Caco-2 (cell line): ENCODE measurements at regions of chr10 and their contacts with region 1.

Region 1: GRCh38 chr10:70267161-70267933 is 16.5 kb downstream of the NPFFR1 start:
- DNase-seq: peak; percentile 41 to 45
- H3K4me3 ChIP-seq: no peak overlapping the region
- H3K4me3 Mint-ChIP-seq: no peak overlapping the region
- H3K27ac Mint-ChIP-seq: no peak overlapping the region
- H3K4me1 ChIP-seq: no peaks in the 10 kb centered on the region; the same call in 1 of the 2 replicates
- H3K4me1 Mint-ChIP-seq: peaks cover 6% of the 10 kb centered on the region
- H3K27me3 ChIP-seq: no peaks in the 10 kb centered on the region; the same call in 1 of the 2 replicates
- H3K27me3 Mint-ChIP-seq: no peaks in the 10 kb centered on the region
- CTCF ChIP-seq: no peak

Region 2: GRCh38 chr10:70034232-70034631 is 233.1 kb before region 1 on chr10:
- CTCF ChIA-PET with region 1: no interaction called
- POLR2A ChIA-PET with region 1: no interaction called
- intact Hi-C with region 1: no loop called
- DNase-seq: no peak
- H3K4me3 ChIP-seq: no peak overlapping the region
- H3K4me3 Mint-ChIP-seq: no peak overlapping the region
- H3K27ac Mint-ChIP-seq: no peak overlapping the region
- H3K4me1 ChIP-seq: no peaks in the 10 kb centered on the region
- H3K4me1 Mint-ChIP-seq: no peaks in the 10 kb centered on the region
- H3K27me3 ChIP-seq: peaks cover 2% of the 10 kb centered on the region; the same call in 1 of the 2 replicates
- H3K27me3 Mint-ChIP-seq: peaks cover 3% of the 10 kb centered on the region
- CTCF ChIP-seq: no peak

Region 3: GRCh38 chr10:70084189-70084588 is 183.2 kb before region 1 on chr10:
- CTCF ChIA-PET with region 1: interaction called, 12 read pairs
- POLR2A ChIA-PET with region 1: no interaction called
- intact Hi-C with region 1: no loop called
- DNase-seq: peak; percentile 45 to 53
- H3K4me3 ChIP-seq: no peak overlapping the region
- H3K4me3 Mint-ChIP-seq: no peak overlapping the region
- H3K27ac Mint-ChIP-seq: no peak overlapping the region
- H3K4me1 ChIP-seq: peaks cover 46% of the 10 kb centered on the region
- H3K4me1 Mint-ChIP-seq: peaks cover 30% of the 10 kb centered on the region
- H3K27me3 ChIP-seq: no peaks in the 10 kb centered on the region
- H3K27me3 Mint-ChIP-seq: peaks cover 6% of the 10 kb centered on the region
- CTCF ChIP-seq: peak; percentile 25 to 52

Region 4: GRCh38 chr10:70096705-70097420 is 170.5 kb before region 1 on chr10:
- CTCF ChIA-PET with region 1: no interaction called
- POLR2A ChIA-PET with region 1: no interaction called
- intact Hi-C with region 1: no loop called
- DNase-seq: no peak
- H3K4me3 ChIP-seq: no peak overlapping the region
- H3K4me3 Mint-ChIP-seq: no peak overlapping the region
- H3K27ac Mint-ChIP-seq: no peak overlapping the region
- H3K4me1 ChIP-seq: peaks cover 26% of the 10 kb centered on the region
- H3K4me1 Mint-ChIP-seq: peaks cover 24% of the 10 kb centered on the region
- H3K27me3 ChIP-seq: no peaks in the 10 kb centered on the region
- H3K27me3 Mint-ChIP-seq: no peaks in the 10 kb centered on the region
- CTCF ChIP-seq: no peak

Region 5: GRCh38 chr10:70227548-70228320 is 39.6 kb before region 1 on chr10:
- CTCF ChIA-PET with region 1: interaction called, 167 read pairs
- POLR2A ChIA-PET with region 1: interaction called, 21 read pairs
- intact Hi-C with region 1: loop called (anchors 2 kb)
- DNase-seq: no peak
- H3K4me3 ChIP-seq: no peak overlapping the region
- H3K4me3 Mint-ChIP-seq: no peak overlapping the region
- H3K27ac Mint-ChIP-seq: no peak overlapping the region
- H3K4me1 ChIP-seq: peaks cover 16% of the 10 kb centered on the region
- H3K4me1 Mint-ChIP-seq: peaks cover 19% of the 10 kb centered on the region
- H3K27me3 ChIP-seq: no peaks in the 10 kb centered on the region
- H3K27me3 Mint-ChIP-seq: no peaks in the 10 kb centered on the region
- CTCF ChIP-seq: no peak

Region 6: GRCh38 chr10:70283445-70284399 is 16.4 kb after region 1 on chr10 and contains the start of gene NPFFR1:
- CTCF ChIA-PET with region 1: interaction called, 17 read pairs
- POLR2A ChIA-PET with region 1: interaction called, 6 read pairs
- intact Hi-C with region 1: no loop called
- DNase-seq: no peak
- H3K4me3 ChIP-seq: no peak within 1 kb of the TSS
- H3K4me3 Mint-ChIP-seq: no peak within 1 kb of the TSS
- H3K27ac Mint-ChIP-seq: no peak within 1 kb of the TSS
- H3K4me1 ChIP-seq: no peaks in the 10 kb centered on the region
- H3K4me1 Mint-ChIP-seq: no peaks in the 10 kb centered on the region
- H3K27me3 ChIP-seq: no peaks in the 10 kb centered on the region
- H3K27me3 Mint-ChIP-seq: peaks cover 11% of the 10 kb centered on the region
- CTCF ChIP-seq: no peak
- total RNA-seq, gene NPFFR1: not detected in 2 replicates

Region 7: DNA sequence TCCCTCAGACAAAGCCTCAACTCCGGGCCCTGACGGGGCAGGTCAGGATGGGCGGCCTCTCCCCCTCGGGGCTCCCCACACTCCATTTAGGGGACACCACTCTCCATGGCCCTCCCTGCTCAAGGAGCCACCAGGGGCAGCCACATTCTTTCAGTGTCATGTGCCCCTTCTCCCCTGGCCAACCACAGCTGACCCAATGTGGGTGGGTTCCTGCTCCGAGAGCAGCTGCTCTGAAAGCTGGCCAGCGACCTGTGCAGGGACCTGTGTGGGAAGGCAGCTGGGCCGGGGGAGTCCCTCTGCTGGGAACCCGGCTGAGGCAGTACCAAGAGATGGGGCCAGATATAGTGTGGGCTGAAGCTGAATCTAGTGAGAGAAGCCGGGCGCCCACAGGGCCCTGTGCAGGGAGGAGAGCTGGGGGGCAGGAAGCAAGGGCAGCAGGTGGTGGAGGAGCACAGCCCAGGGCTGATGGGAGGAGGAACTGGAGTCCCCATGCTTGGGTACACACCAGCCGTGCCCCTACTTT is 57.1 kb after region 1 on chr10:
- CTCF ChIA-PET with region 1: interaction called, 6 read pairs
- POLR2A ChIA-PET with region 1: no interaction called
- intact Hi-C with region 1: loop called (anchors 2 kb)
- DNase-seq: peak in 1 of 2 experiments; percentile 31
- H3K4me3 ChIP-seq: no peak overlapping the region
- H3K4me3 Mint-ChIP-seq: no peak overlapping the region
- H3K27ac Mint-ChIP-seq: peak overlapping the region; percentile 24
- H3K4me1 ChIP-seq: peaks cover 22% of the 10 kb centered on the region
- H3K4me1 Mint-ChIP-seq: peaks cover 21% of the 10 kb centered on the region
- H3K27me3 ChIP-seq: no peaks in the 10 kb centered on the region
- H3K27me3 Mint-ChIP-seq: no peaks in the 10 kb centered on the region
- CTCF ChIP-seq: no peak

Region 8: GRCh38 chr10:70363971-70364771 is 96.8 kb after region 1 on chr10:
- CTCF ChIA-PET with region 1: interaction called, 214 read pairs
- POLR2A ChIA-PET with region 1: interaction called, 3 read pairs
- intact Hi-C with region 1: loop called (anchors 1 kb)
- DNase-seq: peak; percentile 94 to 97
- H3K4me3 ChIP-seq: no peak overlapping the region
- H3K4me3 Mint-ChIP-seq: no peak overlapping the region
- H3K27ac Mint-ChIP-seq: peak overlapping the region; percentile 33
- H3K4me1 ChIP-seq: peaks cover 16% of the 10 kb centered on the region
- H3K4me1 Mint-ChIP-seq: peaks cover 28% of the 10 kb centered on the region
- H3K27me3 ChIP-seq: no peaks in the 10 kb centered on the region
- H3K27me3 Mint-ChIP-seq: no peaks in the 10 kb centered on the region
- CTCF ChIP-seq: peak; percentile 98 to 99

Region 9: DNA sequence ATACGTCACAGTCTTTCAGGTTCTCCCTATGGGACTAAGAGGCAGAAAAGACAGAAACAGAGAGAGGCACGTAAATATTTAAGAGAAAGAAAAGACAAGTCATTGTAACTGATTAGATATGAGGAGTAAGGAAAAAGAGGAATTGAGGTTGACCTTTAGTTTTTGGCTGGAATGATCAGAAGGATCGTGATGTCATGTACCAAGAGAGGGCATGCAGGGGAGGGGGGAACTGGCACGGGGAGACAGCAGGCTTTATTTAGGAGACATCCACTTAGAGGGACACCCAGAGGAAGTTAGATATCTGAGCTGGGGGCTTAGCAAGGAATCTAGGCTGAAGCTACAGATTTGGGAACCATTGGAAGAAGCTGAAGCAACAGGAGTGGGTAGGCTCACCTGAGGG is 124.3 kb after region 1 on chr10:
- CTCF ChIA-PET with region 1: interaction called, 87 read pairs
- POLR2A ChIA-PET with region 1: no interaction called
- intact Hi-C with region 1: loop called (anchors 1 kb)
- DNase-seq: no peak
- H3K4me3 ChIP-seq: no peak overlapping the region
- H3K4me3 Mint-ChIP-seq: no peak overlapping the region
- H3K27ac Mint-ChIP-seq: no peak overlapping the region
- H3K4me1 ChIP-seq: peaks cover 4% of the 10 kb centered on the region; the same call in 1 of the 2 replicates
- H3K4me1 Mint-ChIP-seq: peaks cover 24% of the 10 kb centered on the region
- H3K27me3 ChIP-seq: no peaks in the 10 kb centered on the region
- H3K27me3 Mint-ChIP-seq: no peaks in the 10 kb centered on the region
- CTCF ChIP-seq: no peak

Region 10: GRCh38 chr10:70738006-70738760 is 470.8 kb after region 1 on chr10:
- CTCF ChIA-PET with region 1: no interaction called
- POLR2A ChIA-PET with region 1: no interaction called
- intact Hi-C with region 1: no loop called
- DNase-seq: no peak
- H3K4me3 ChIP-seq: no peak overlapping the region
- H3K4me3 Mint-ChIP-seq: no peak overlapping the region
- H3K27ac Mint-ChIP-seq: no peak overlapping the region
- H3K4me1 ChIP-seq: peaks cover 13% of the 10 kb centered on the region; the same call in 1 of the 2 replicates
- H3K4me1 Mint-ChIP-seq: no peaks in the 10 kb centered on the region
- H3K27me3 ChIP-seq: no peaks in the 10 kb centered on the region
- H3K27me3 Mint-ChIP-seq: no peaks in the 10 kb centered on the region
- CTCF ChIP-seq: no peak